Naive thymus-derived CD4-positive, alpha-beta T cell (primary cell): ENCODE measurements at regions of chr3 and their contacts with region 1.

Region 1: DNA sequence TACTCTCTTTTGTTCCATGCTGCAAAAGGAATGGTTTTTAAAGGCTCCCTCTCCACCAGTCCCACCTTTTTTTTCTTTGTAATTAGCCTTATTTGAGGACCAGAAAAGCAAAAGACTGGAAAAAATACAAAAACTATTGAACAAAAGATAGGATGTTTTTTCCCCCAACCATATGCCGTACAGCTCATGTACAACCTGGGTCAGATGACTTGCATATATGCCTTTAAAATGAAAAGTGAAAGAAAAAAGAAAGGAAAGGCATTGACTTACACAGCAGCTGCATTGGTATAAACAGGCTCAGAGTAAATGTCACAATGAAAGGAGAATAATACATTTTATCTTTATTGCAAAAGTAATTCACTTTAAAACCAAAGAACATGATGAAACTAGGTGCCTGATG is 69.5 kb upstream of the CMC1 start:
- DNase-seq: peak in 6 of 9 donors; percentile 12 to 53 (median 36)
- ATAC-seq: peak; percentile 67
- H3K4me3 ChIP-seq: peak overlapping the region; percentile 21
- H3K4me3 Mint-ChIP-seq: peak overlapping the region in 9 of 10 donors; percentile 63 to 85 (median 80)
- H3K27ac ChIP-seq: no peak overlapping the region
- H3K27ac Mint-ChIP-seq: peak overlapping the region; percentile 11 to 91 (median 77)
- H3K4me1 ChIP-seq: peaks cover 5 to 9% of the 10 kb centered on the region in 2 donors
- H3K4me1 Mint-ChIP-seq: peaks cover 6 to 24% (median 18%) of the 10 kb centered on the region in 7 donors
- H3K27me3 ChIP-seq: no peaks in the 10 kb centered on the region
- H3K27me3 Mint-ChIP-seq: no peaks in the 10 kb centered on the region

Region 2: GRCh38 chr3:28151608-28152228 is 20.2 kb before region 1 on chr3:
- CTCF ChIA-PET with region 1: no interaction called
- POLR2A ChIA-PET with region 1: no interaction called
- intact Hi-C with region 1: loop called in 1 of 2 experiments (anchors 2 kb)
- DNase-seq: peak in 3 of 9 donors; percentile 1 to 9 (median 7)
- ATAC-seq: no peak
- H3K4me3 ChIP-seq: no peak overlapping the region
- H3K4me3 Mint-ChIP-seq: peak overlapping the region in 8 of 10 donors; percentile 45 to 72 (median 63)
- H3K27ac ChIP-seq: no peak overlapping the region
- H3K27ac Mint-ChIP-seq: peak overlapping the region in 1 of 9 donors; percentile 67
- H3K4me1 ChIP-seq: peaks cover 0 to 8% of the 10 kb centered on the region in 2 donors
- H3K4me1 Mint-ChIP-seq: peaks cover 0 to 14% (median 7%) of the 10 kb centered on the region in 7 donors
- H3K27me3 ChIP-seq: no peaks in the 10 kb centered on the region
- H3K27me3 Mint-ChIP-seq: peaks cover 0 to 7% (median 0%) of the 10 kb centered on the region in 5 donors

Region 3: DNA sequence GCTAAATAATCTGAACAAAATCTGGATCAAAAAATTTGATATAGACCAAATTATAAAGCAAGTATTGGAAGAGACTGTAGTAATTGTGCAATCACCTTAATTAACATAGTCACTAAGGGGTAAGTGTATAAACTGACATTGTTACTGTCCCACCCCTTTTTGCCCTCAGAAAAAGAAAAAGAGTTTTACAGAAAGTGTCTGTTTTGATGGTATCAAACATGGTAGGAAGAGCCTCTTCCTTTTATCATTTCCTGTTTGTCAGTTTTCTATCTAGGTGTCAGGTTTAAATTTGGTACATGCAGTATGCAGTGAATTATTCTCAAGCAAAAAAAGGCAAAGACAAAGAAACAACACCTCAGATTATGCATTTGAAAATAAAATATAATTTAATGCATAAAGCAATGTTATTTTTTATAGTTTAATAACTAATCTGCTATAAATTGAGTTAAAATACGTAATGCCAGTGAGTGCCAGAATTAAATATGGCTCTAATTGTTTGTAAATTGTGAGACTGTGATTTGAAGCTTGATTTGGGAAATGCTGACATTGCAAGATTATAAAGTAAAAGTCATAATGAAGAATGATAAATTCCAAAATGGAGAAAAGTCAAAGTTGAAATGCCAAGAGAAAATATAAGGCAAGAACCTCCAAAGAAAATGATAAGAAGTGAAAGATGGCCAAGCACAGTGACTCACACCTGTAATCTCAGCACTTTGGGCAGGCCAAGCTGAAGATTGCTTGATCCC is 39.2 kb after region 1 on chr3:
- CTCF ChIA-PET with region 1: no interaction called
- POLR2A ChIA-PET with region 1: no interaction called
- intact Hi-C with region 1: loop called in 1 of 2 experiments (anchors 2 kb)
- DNase-seq: peak in 6 of 9 donors; percentile 33 to 69 (median 54)
- ATAC-seq: peak; percentile 83
- H3K4me3 ChIP-seq: no peak overlapping the region
- H3K4me3 Mint-ChIP-seq: peak overlapping the region in 9 of 10 donors; percentile 30 to 80 (median 66)
- H3K27ac ChIP-seq: no peak overlapping the region
- H3K27ac Mint-ChIP-seq: peak overlapping the region; percentile 15 to 90 (median 68)
- H3K4me1 ChIP-seq: peaks cover 9 to 24% of the 10 kb centered on the region in 2 donors
- H3K4me1 Mint-ChIP-seq: peaks cover 11 to 47% (median 34%) of the 10 kb centered on the region in 7 donors
- H3K27me3 ChIP-seq: no peaks in the 10 kb centered on the region
- H3K27me3 Mint-ChIP-seq: no peaks in the 10 kb centered on the region

Region 4: DNA sequence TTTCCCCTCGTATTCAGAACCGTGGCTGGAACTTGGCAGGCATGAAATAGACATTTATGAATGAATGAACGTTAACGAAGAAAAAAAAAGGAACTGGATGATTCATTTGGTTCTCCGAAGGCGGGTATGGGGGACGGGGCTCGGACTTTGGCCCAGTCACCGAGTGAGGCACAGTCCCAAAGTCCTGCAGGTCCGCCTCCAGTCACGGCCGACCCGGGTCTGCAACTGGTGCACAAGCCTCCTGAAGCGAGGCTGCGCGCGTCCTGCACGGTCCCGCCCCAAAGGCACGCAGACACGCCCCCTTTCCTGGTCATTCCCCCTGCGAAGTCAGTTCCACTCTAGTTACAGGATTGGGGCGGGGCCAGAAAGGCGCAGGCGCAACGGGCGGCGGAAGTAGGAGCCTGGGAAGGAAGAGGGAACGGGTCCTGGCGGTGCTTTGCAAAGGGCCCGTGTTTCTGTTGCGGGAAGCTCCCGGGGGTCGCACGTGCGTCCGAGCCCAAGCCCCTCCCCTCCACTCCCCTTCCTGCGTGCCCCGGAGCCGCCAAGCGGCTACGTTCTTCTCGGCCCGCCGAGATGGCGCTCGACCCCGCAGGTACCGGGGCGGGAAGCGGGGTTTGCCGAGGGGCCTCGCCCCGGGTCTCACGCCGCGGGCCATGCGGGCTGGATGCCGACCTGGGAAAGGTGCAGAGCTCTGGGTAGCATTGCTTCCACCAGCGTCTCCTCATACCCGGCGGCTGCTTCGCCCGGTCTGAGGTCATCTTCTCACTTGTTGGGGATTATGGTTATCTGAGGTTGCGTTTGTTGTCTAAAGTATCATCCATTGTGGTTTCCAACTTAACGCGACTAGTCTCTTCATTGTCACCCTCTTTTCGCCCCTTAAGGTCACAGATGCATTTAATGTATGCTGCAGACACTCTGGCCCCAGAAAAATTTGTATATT is 69.5 kb after region 1 on chr3 and contains the start of gene CMC1:
- CTCF ChIA-PET with region 1: no interaction called
- POLR2A ChIA-PET with region 1: no interaction called
- intact Hi-C with region 1: loop called (anchors 2 kb)
- DNase-seq: peak; percentile 69 to 93 (median 83)
- ATAC-seq: peak; percentile 95
- H3K4me3 ChIP-seq: peak within 1 kb of the TSS; percentile 71
- H3K4me3 Mint-ChIP-seq: peak within 1 kb of the TSS; percentile 88 to 97 (median 96)
- H3K27ac ChIP-seq: peak within 1 kb of the TSS; percentile 71
- H3K27ac Mint-ChIP-seq: peak within 1 kb of the TSS; percentile 85 to 96 (median 94)
- H3K4me1 ChIP-seq: peaks cover 16 to 40% of the 10 kb centered on the region in 2 donors
- H3K4me1 Mint-ChIP-seq: peaks cover 32 to 77% (median 60%) of the 10 kb centered on the region in 7 donors
- H3K27me3 ChIP-seq: no peaks in the 10 kb centered on the region
- H3K27me3 Mint-ChIP-seq: no peaks in the 10 kb centered on the region
- total RNA-seq, gene CMC1: 11.0 to 25.1 (median 13.9) TPM

Region 5: GRCh38 chr3:28406241-28406640 is 234.3 kb after region 1 on chr3:
- CTCF ChIA-PET with region 1: no interaction called
- POLR2A ChIA-PET with region 1: no interaction called
- intact Hi-C with region 1: no loop called
- DNase-seq: no peak
- ATAC-seq: no peak
- H3K4me3 ChIP-seq: no peak overlapping the region
- H3K4me3 Mint-ChIP-seq: no peak overlapping the region
- H3K27ac ChIP-seq: no peak overlapping the region
- H3K27ac Mint-ChIP-seq: no peak overlapping the region
- H3K4me1 ChIP-seq: no peaks in the 10 kb centered on the region
- H3K4me1 Mint-ChIP-seq: no peaks in the 10 kb centered on the region
- H3K27me3 ChIP-seq: no peaks in the 10 kb centered on the region
- H3K27me3 Mint-ChIP-seq: no peaks in the 10 kb centered on the region